HepG2 (cell line): ENCODE measurements at regions of chr2 and their contacts with region 1.

Region 1: GRCh38 chr2:174071321-174071720 is 106.1 kb upstream of the SP3 start:
- DNase-seq: no peak
- ATAC-seq: no peak
- H3K4me3 ChIP-seq: no peak overlapping the region
- H3K27ac ChIP-seq: no peak overlapping the region
- H3K4me1 ChIP-seq: no peaks in the 10 kb centered on the region
- H3K27me3 ChIP-seq: no peaks in the 10 kb centered on the region
- CTCF ChIP-seq: no peak
- EP300 ChIP-seq: no peak
- POLR2A ChIP-seq: no peak
- RAD21 ChIP-seq: no peak

Region 2: GRCh38 chr2:174334781-174335251 is 263.5 kb after region 1 on chr2 and contains the start of gene SP9:
- CTCF ChIA-PET with region 1: no interaction called
- POLR2A ChIA-PET with region 1: no interaction called
- in situ Hi-C with region 1: no loop called
- intact Hi-C with region 1: loop called (anchors 1 kb)
- DNase-seq: peak; percentile 44
- ATAC-seq: peak; percentile 55
- H3K4me3 ChIP-seq: peak within 1 kb of the TSS; percentile 35 to 72 (median 63)
- H3K27ac ChIP-seq: no peak within 1 kb of the TSS
- H3K4me1 ChIP-seq: peaks cover 52% of the 10 kb centered on the region
- H3K27me3 ChIP-seq: peaks cover 18 to 89% of the 10 kb centered on the region in 2 experiments
- CTCF ChIP-seq: no peak
- EP300 ChIP-seq: no peak
- POLR2A ChIP-seq: no peak
- RAD21 ChIP-seq: no peak
- total RNA-seq, gene SP9: not detected in 2 replicates